Mucosa of descending colon (tissue), 3 donors: ENCODE measurements at regions of chr3 and their contacts with region 1.

Region 1: DNA sequence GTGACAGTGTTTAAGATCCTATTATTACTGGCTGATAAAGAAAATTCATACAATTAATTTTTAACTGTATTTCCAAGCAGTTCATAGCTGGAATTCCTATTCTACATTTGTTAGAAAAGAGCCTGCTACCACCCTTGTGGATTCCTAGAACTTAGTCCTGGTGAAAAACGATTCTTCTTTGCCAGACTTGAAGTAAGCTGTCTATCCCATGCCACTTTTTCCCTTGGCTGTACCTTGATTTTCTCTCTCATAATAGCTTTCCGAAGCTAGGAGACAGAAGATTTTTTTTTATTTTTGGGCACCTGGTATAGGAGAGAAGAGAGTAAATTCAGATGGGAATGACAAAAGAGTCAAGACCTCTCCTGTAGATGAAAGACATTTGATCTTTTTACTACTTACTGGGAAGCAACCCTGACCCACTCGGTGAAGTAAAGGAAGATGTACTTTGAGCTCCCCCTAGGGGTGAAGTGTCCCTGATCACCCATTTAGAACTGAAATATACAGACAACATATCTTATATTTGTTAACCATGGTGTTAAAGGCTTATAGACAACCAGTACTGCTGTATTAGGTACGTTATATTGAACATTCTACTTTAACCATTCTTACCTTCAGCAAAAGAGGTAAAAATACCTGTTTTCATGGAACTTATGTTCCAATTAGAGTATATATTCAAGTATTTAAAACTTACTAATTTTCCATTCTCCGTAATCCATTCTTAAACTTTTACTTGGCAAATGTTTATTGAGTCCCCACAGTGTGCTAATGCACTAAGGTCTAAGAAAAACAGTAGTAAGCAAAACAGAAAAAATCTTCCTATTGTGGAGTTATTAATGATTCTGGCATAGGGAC is 36.2 kb upstream of the C3orf38 start:
- DNase-seq: peak in 1 of 3 donors; percentile 89
- ATAC-seq: peak; percentile 88
- H3K4me3 ChIP-seq: no peak overlapping the region
- H3K4me1 ChIP-seq: no peaks in the 10 kb centered on the region
- CTCF ChIP-seq: peak; percentile 28

Region 2: GRCh38 chr3:87766726-87767125 is 346.8 kb before region 1 on chr3:
- intact Hi-C with region 1: loop called in 1 of 2 experiments (anchors 10 kb)
- DNase-seq: no peak
- ATAC-seq: no peak
- H3K4me3 ChIP-seq: no peak overlapping the region
- H3K4me1 ChIP-seq: no peaks in the 10 kb centered on the region
- CTCF ChIP-seq: no peak